ENCODE measurements at regions of chr6 and their contacts with region 1.

Region 1: GRCh38 chr6:149834513-149835481 is 29.4 kb downstream of the LRP11 start:
- DNase-seq: peak; percentile 73
- H3K4me3 ChIP-seq: no peak overlapping the region
- H3K27ac ChIP-seq: no peak overlapping the region
- H3K4me1 ChIP-seq: peaks cover 18% of the 10 kb centered on the region
- H3K27me3 ChIP-seq: no peaks in the 10 kb centered on the region

Region 2: GRCh38 chr6:149922642-149923326 is 88.0 kb after region 1 on chr6 and contains the start of gene RAET1G:
- in situ Hi-C with region 1: loop called (anchors 5 kb)
- DNase-seq: peak; percentile 97
- H3K4me3 ChIP-seq: peak within 1 kb of the TSS; percentile 83
- H3K27ac ChIP-seq: no peak within 1 kb of the TSS
- H3K4me1 ChIP-seq: no peaks in the 10 kb centered on the region
- H3K27me3 ChIP-seq: no peaks in the 10 kb centered on the region; the same call in 1 of the 2 replicates
- total RNA-seq, gene RAET1G: 5.2 and 8.9 TPM in 2 replicates

Region 3: DNA sequence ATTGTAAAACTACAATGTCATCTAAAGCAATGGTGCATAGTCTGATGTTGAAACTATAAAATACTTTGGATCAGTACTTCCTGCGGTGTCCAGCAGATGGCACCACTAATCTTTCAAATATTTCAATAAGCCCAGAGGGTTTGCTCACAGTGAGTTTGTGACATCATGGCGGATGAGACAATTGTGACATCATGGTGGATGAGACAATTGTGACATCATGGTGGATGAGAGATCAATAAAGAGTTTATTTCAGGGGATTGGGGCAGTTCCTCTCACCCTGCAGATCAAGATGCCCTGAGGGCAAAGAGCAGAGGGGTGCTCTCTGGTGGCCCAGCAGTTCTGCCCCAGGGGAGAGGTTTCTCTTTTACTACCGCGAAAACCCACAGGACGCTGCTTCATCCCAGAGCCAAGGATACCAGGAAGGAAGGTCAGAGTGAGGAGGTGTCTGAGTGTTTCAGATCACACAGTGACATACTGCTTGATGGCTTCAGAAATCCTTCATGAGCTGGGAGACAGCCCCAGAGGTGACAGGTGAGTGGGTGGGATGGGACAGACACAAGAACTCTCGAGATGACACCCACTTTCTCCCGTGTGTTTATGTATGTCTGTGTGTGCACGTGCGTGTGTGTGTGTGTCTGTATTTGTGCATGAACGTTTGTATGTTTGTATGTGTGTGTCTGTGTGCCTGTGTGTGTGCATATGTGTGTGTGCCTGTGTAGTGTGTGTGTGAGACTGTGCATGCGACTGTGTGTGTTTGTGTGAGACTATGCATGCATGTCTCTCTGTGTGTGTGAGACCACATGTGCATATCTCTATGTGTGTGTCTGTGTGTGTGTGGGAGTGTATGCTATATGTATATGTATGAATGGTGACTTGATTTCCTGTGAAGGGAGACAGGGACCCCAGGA is 99.7 kb after region 1 on chr6:
- in situ Hi-C with region 1: no loop called
- DNase-seq: peak; percentile 89
- H3K4me3 ChIP-seq: no peak overlapping the region
- H3K27ac ChIP-seq: no peak overlapping the region
- H3K4me1 ChIP-seq: 0 out of 2 replicates have a peak, but pooled peaks cover 5% of the 10 kb centered on the region
- H3K27me3 ChIP-seq: 0 out of 2 replicates have a peak, but pooled peaks cover 4% of the 10 kb centered on the region

Measured in GM23248 (cell line).